Right cardiac atrium (tissue), 5 donors: ENCODE measurements at regions of chr11 and their contacts with region 1.

Region 1: DNA sequence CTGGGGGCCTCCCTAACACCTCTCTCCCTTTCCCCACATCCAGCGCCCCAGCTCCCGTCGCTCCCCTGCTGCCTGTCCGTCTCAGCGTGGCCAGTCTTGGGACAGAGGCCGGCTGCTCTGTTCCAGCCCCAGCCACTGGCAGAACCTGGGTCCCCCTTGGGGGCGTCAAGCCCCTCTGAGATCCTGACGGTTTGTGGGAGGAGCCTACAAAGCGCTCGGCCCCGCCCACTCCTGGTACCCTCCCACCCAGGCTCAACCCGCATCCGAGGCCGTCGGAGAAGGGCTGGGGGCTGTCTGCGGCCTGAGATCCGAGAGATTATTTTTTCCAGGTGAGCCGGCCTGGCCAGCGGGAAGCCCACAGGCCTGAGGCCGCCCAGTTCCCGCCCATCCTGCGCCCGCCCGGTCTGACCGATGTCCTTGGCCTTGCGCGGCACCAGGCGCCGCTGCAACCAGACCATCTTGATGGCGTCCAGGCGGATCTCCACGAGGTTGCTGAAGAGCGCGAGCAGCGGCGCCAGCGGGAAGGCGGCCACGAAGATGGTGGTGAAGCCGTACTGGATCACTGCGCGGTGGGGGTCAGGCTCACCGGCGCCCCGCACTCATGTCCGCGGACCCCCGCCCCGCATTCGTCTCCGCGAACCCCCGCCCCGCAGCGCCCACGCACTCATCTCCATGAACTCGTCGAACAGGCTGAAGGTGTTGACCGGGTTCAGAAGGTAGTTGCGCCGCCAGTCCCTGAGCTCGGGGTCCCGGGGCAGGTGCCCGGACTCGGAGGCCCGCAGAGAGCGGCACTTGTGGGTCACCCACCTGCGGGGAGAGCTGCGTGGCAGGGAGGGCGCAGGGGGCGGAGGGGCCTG is 5.5 kb upstream of the SIGIRR start:
- DNase-seq: peak in 2 of 3 donors; percentile 31 to 55
- ATAC-seq: no peak
- H3K4me3 ChIP-seq: no peak overlapping the region
- H3K27ac ChIP-seq: no peak overlapping the region
- H3K4me1 ChIP-seq: no peaks in the 10 kb centered on the region
- H3K27me3 ChIP-seq: no peaks in the 10 kb centered on the region

Region 2: DNA sequence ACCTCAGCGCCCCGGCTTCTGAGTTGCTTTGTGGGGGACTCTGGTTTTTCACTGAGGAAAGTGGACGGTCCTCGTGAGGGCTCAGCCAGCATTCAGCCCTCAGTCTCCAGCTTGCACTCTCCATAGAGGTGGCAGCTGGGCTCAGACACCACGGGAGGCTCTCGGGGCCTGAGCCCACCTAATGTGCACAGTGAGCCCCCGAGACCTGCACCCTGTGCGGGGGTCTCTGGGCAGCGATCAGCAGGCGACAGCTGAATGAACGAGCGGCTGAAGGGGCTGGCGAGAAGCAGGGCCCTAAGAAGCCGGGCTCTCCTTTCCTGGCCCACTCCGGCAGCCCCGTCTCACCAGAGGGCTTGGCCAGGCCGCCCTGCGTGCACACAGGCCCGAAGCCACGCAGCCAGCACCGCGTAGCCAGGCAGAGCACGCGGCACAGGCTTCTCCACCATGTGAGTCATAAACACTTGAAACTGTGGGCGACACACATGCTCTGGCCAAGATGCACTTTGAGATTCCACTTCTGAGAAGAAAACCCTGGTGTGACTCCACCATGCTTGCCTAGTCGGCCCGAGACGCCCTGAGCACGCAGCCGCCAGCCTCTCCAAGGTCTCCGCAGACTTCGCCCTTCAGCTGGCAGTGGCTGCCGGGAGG is 861.2 kb after region 1 on chr11:
- intact Hi-C with region 1: loop called in 1 of 4 experiments (anchors 10 kb)
- DNase-seq: peak; percentile 9 to 32 (median 24)
- ATAC-seq: no peak
- H3K4me3 ChIP-seq: no peak overlapping the region
- H3K27ac ChIP-seq: no peak overlapping the region
- H3K4me1 ChIP-seq: no peaks in the 10 kb centered on the region
- H3K27me3 ChIP-seq: no peaks in the 10 kb centered on the region